ENCODE measurements at regions of chr18 and their contacts with region 1.

Region 1: GRCh38 chr18:41982942-41983660 is 28.1 kb downstream of the PIK3C3 start:
- DNase-seq: no peak
- ATAC-seq: no peak
- H3K4me3 ChIP-seq: no peak overlapping the region
- H3K27ac ChIP-seq: no peak overlapping the region
- H3K4me1 ChIP-seq: no peaks in the 10 kb centered on the region
- H3K27me3 ChIP-seq: no peaks in the 10 kb centered on the region
- CTCF ChIP-seq: no peak
- EP300 ChIP-seq: no peak
- POLR2A ChIP-seq: no peak
- RAD21 ChIP-seq: no peak

Region 2: GRCh38 chr18:42005782-42006181 is 22.7 kb after region 1 on chr18:
- CTCF ChIA-PET with region 1: no interaction called
- POLR2A ChIA-PET with region 1: interaction called, 4 read pairs
- in situ Hi-C with region 1: no loop called
- intact Hi-C with region 1: loop called (anchors 1 kb)
- DNase-seq: no peak
- ATAC-seq: no peak
- H3K4me3 ChIP-seq: no peak overlapping the region
- H3K27ac ChIP-seq: no peak overlapping the region
- H3K4me1 ChIP-seq: no peaks in the 10 kb centered on the region
- H3K27me3 ChIP-seq: no peaks in the 10 kb centered on the region
- CTCF ChIP-seq: no peak
- EP300 ChIP-seq: no peak
- POLR2A ChIP-seq: no peak
- RAD21 ChIP-seq: no peak

Region 3: DNA sequence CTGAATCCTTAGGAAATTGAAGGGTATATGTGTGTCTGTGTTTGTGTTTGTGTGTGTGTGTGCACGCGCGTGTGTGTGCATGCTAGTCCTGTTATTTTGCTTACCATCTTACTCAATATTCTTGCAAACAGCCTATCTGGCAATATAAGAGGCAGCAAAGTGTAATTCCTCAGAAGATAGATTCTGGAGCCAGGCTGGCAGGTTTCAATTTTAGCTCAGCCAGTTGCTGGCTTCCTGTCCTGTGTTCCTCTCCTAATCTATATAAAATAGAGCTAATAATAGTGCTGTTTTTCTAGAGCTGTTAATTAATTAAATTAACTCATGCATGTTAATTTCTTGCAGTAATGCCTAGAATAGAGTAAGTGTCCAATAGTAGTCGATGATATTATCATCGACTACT is 228.1 kb after region 1 on chr18:
- CTCF ChIA-PET with region 1: no interaction called
- POLR2A ChIA-PET with region 1: no interaction called
- in situ Hi-C with region 1: no loop called
- intact Hi-C with region 1: no loop called
- DNase-seq: no peak
- ATAC-seq: no peak
- H3K4me3 ChIP-seq: no peak overlapping the region
- H3K27ac ChIP-seq: no peak overlapping the region
- H3K4me1 ChIP-seq: no peaks in the 10 kb centered on the region
- H3K27me3 ChIP-seq: no peaks in the 10 kb centered on the region
- CTCF ChIP-seq: no peak
- EP300 ChIP-seq: no peak
- POLR2A ChIP-seq: no peak
- RAD21 ChIP-seq: no peak

Region 4: GRCh38 chr18:43060020-43060419 is 1076.9 kb after region 1 on chr18:
- CTCF ChIA-PET with region 1: no interaction called
- POLR2A ChIA-PET with region 1: no interaction called
- in situ Hi-C with region 1: no loop called
- intact Hi-C with region 1: no loop called
- DNase-seq: no peak
- ATAC-seq: no peak
- H3K4me3 ChIP-seq: no peak overlapping the region
- H3K27ac ChIP-seq: no peak overlapping the region
- H3K4me1 ChIP-seq: no peaks in the 10 kb centered on the region
- H3K27me3 ChIP-seq: no peaks in the 10 kb centered on the region
- CTCF ChIP-seq: no peak
- EP300 ChIP-seq: no peak
- POLR2A ChIP-seq: no peak
- RAD21 ChIP-seq: no peak

Measured in K562 (cell line).